PC-3 (cell line): ENCODE measurements at regions of chr1 and their contacts with region 1.

Region 1: DNA sequence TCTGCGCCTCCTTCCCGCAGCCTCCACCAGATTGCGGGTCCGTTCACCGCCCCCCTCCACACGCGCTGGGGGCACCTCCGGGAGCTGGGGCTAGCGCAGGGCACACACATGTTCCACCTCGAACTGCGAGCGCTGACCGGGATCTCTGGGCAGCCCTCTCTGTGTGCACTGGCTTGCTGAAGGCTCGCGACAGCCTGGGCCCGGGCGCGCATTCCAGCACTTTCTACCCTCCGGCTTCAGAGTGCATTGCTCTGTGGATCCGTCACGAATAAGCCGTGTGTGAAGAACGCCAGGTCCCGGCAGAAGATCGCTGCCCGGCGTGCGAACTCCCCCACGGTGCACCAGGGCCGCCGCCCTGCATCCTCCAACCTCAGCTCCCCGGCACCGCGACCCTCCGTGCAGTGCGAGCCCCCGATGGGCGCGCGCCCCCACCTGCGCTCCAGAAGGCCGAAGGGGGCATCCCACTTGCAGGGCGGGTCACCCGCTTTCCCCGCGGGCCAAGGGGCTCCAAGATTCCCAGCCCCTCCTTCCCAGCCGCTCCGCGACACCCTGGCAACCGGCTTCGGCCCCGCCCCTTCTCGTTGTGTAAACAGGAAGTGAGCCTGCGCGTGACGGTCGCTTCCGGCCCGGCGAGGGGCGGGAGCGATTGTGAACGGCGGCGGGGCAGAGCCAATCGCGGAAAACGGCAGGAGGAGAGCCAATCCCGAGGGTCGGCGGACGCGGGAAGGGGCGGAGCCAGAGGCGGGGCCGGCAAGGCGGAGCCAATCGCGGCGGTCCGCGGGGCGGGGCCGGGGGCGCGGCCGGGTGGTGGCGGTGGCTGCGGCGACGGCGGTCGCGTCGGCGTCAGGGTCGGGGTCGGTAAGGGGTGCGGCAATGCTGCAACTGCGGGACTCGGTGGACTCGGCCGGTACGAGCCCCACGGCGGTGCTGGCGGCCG is at the start of gene TPRG1L:
- DNase-seq: peak; percentile 99
- ATAC-seq: peak; percentile 86
- H3K4me3 ChIP-seq: peak within 1 kb of the TSS; percentile 91
- H3K27ac ChIP-seq: no peak within 1 kb of the TSS
- H3K4me1 ChIP-seq: peaks cover 17% of the 10 kb centered on the region
- H3K27me3 ChIP-seq: no peaks in the 10 kb centered on the region
- CTCF ChIP-seq: no peak
- total RNA-seq, gene TPRG1L: 32.0 and 44.5 TPM in 2 replicates

Region 2: DNA sequence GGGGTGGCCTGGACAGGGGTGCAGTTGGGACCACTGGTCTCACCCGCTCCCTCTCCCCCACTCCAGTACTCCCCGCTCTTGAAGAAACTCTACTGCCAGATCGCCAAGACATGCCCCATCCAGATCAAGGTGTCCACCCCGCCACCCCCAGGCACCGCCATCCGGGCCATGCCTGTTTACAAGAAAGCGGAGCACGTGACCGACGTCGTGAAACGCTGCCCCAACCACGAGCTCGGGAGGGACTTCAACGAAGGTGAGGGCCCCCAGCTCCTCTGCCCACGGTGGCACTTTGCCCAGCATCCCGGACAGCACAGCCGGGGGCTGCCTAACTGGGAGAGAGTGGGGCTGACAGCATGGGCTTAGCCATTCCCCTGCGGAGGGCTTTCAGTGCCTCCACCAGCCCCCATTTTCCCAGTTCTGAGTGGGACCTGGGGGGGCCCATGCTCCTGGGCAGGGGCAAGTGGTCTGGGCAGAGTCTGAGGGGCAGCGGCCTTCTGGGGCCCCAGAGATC is 97.5 kb after region 1 on chr1:
- CTCF ChIA-PET with region 1: interaction called, 3 read pairs
- POLR2A ChIA-PET with region 1: no interaction called
- intact Hi-C with region 1: loop called (anchors 5 kb)
- DNase-seq: no peak
- ATAC-seq: no peak
- H3K4me3 ChIP-seq: no peak overlapping the region
- H3K27ac ChIP-seq: no peak overlapping the region
- H3K4me1 ChIP-seq: no peaks in the 10 kb centered on the region
- H3K27me3 ChIP-seq: peaks cover 9% of the 10 kb centered on the region
- CTCF ChIP-seq: no peak